Motor neuron (in vitro differentiated cells): ENCODE measurements at regions of chr13 and their contacts with region 1.

Region 1: DNA sequence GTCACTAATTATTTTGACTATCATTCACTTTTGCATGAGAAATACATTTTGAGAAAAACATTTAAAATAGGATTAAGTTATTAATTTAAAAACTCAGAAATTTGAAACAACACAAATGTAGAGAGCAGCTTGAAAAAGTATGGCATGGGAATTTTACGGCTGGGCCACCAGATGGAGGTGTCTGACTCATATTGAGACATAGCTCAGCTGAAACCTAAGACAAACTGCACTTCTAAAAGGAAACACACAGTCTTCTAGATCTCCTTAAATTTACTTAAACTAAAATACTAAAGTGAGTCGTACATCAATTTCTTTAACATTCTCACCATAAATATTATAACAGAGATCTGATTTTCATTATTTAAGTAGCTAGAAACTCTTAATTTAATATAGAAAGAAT is 41.9 kb upstream of the POSTN start:
- ATAC-seq: peak in 5 of 8 experiments; percentile 45 to 78 (median 67)
- H3K4me3 ChIP-seq: no peak overlapping the region
- H3K27ac ChIP-seq: no peak overlapping the region
- H3K4me1 ChIP-seq: peaks cover 3 to 4% of the 10 kb centered on the region in 2 donors

Region 2: DNA sequence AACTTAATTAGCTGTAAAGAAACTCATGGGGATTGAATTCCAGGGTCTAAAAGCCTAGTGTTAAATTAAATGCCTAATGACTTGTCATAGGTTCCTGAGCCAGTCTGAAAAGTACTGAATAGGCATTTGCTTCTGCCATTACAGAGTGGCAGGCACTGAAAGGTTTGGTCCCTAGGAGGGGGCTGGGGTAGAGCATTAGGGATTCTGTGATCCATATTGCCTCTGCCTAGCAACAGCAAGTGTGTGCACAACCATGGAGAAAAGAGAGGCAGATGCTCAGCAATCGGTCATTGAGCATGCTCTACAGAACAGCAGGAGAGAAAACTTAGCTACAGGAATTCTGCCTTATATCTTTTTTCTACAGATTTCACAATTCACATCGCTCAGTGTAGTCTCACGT is 95.5 kb after region 1 on chr13:
- in situ Hi-C with region 1: no loop called
- ATAC-seq: peak in 5 of 8 experiments; percentile 62 to 97 (median 67)
- H3K4me3 ChIP-seq: no peak overlapping the region
- H3K27ac ChIP-seq: no peak overlapping the region
- H3K4me1 ChIP-seq: peaks cover 8% of the 10 kb centered on the region in 2 donors

Region 3: GRCh38 chr13:37869756-37870488 is 229.4 kb after region 1 on chr13 and contains the start of gene TRPC4:
- in situ Hi-C with region 1: loop called in 1 of 9 experiments (anchors 25 kb)
- ATAC-seq: peak; percentile 68 to 90 (median 86)
- H3K4me3 ChIP-seq: peak within 1 kb of the TSS; percentile 44 to 61 (median 57)
- H3K27ac ChIP-seq: no peak within 1 kb of the TSS
- H3K4me1 ChIP-seq: peaks cover 0 to 3% of the 10 kb centered on the region in 2 donors
- total RNA-seq, gene TRPC4: 0.25 to 7.3 (median 3.1) TPM

Region 4: DNA sequence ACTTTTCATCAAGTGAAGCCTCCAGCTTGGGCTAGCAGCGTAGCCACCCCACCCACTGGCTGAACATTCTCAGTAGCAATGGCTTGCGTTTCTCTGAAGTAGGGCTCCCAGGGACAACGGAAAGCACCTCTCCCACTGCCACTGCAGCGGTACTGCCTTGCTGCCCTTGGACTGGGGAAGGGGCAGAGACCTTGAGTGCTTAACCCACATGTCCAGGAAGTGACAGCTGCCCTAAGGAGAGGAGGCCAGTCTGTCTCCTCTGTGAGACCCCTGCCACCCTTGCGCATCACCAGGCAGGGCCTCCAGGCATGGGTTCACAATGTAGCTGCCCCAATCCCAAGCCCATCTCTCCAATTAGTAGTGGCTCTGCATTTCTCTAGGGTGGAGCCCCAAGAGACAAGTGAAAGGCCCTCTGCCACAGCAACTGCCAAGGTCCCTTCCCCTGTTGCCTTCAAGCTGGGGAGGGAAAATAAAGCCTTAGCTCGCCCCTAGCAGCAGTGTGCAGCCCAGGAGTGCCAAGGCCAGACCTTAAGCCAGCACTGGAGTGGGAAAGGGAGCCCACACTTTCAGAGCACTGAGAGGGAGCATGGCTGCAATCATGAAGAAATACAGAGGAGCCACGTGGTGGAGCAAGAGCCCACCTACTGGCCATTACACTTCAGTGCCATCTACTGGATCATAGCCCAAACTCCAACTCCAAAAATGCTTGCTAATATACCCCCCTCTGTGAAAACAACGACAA is 405.0 kb after region 1 on chr13:
- in situ Hi-C with region 1: loop called in 1 of 9 experiments (anchors 25 kb)
- ATAC-seq: peak in 3 of 8 experiments; percentile 67 to 91 (median 79)
- H3K4me3 ChIP-seq: no peak overlapping the region
- H3K27ac ChIP-seq: no peak overlapping the region
- H3K4me1 ChIP-seq: no peaks in the 10 kb centered on the region

Region 5: GRCh38 chr13:38228322-38228721 is 587.8 kb after region 1 on chr13:
- in situ Hi-C with region 1: loop called in 1 of 9 experiments (anchors 25 kb)
- ATAC-seq: no peak
- H3K4me3 ChIP-seq: no peak overlapping the region
- H3K27ac ChIP-seq: no peak overlapping the region
- H3K4me1 ChIP-seq: no peaks in the 10 kb centered on the region